HAP-1 (cell line): ENCODE measurements at regions of chr17 and their contacts with region 1.

Region 1: DNA sequence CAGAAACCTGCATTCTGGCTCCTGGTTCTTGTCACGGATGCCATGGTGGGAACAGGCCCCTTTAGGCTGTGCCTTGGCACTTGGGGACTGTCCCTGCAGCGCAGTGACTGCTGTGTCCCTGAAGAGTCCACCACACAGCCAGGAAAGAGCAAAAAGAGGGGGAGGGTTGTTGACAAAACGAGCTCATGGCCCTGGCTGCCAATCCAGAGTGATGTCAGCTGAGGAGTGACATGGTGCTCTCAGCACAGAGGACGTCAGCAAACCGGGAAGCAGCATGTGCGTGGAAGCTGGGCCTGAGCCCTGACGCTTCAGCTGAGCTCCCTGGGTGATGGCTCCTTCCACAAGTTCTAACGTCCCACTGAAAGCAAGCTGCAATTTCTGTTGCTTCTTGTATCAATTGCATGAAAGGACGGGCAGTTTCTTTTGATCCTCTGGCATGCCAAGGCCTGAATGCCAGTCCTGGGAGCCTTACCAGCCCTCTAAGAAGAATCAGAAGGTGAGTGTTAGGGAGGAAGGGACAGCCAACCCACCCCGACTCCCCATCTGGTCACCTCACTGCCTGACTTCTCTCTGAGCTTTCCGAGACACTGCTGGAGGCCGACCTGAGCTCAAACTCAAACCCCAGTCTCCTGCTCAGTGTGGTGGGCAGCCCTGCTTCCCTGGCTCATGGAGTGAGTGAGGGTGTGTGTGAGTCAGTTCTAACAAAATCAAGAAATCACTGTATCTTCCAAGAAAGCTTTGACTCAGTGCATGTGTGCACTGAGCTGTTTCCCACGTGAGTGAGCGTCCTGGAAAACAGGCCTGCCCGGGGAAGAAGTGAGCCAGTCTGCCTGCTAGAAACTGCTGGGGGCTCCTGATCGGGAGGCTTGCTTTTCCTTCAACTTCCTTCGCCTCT is 14.7 kb upstream of the WNT3 start:
- DNase-seq: no peak
- H3K4me3 ChIP-seq: no peak overlapping the region
- H3K4me1 ChIP-seq: no peaks in the 10 kb centered on the region
- H3K27me3 ChIP-seq: 0 out of 2 replicates have a peak, but pooled peaks cover 3% of the 10 kb centered on the region

Region 2: GRCh38 chr17:46795379-46795952 is 37.7 kb before region 1 on chr17:
- in situ Hi-C with region 1: loop called (anchors 5 kb)
- DNase-seq: no peak
- H3K4me3 ChIP-seq: no peak overlapping the region
- H3K4me1 ChIP-seq: no peaks in the 10 kb centered on the region
- H3K27me3 ChIP-seq: peaks cover 17% of the 10 kb centered on the region